ENCODE measurements at regions of chr9 and their contacts with region 1.

Region 1: DNA sequence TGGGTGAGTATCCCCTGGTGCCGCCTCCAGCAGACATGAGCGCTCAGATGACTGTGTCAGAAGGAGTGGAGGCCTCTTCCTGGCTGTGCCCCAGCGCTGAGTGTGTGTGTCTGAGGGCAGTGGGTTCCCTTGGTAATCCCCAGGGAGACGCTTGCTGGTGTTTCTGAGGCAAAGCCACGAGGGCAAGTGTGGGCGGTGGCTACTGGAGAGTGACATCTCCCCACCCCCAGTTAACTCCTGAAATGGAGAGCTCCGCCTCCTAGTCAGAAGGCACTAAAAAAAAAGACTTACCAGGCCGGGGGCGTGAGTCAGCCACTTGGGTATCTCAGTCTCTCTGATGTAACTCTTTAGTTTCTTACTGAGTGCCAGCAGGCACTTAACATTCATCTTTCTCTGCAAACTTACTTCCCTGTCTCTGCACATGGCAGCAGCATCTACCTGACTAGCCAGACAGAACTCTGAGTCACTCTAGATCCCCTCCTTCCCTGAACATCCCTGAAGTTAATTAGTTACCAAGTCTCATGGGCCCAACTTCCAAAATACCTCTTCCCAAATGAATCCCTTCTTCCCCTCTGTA is 19.3 kb downstream of the ORM2 start:
- DNase-seq: peak; percentile 87
- H3K4me3 Mint-ChIP-seq: peak overlapping the region; percentile 58
- H3K27ac Mint-ChIP-seq: peak overlapping the region; percentile 99
- H3K4me1 Mint-ChIP-seq: peaks cover 51% of the 10 kb centered on the region
- H3K27me3 Mint-ChIP-seq: no peaks in the 10 kb centered on the region

Region 2: GRCh38 chr9:113317777-113318176 is 1031.2 kb before region 1 on chr9:
- intact Hi-C with region 1: no loop called
- DNase-seq: no peak
- H3K4me3 Mint-ChIP-seq: no peak overlapping the region
- H3K27ac Mint-ChIP-seq: no peak overlapping the region
- H3K4me1 Mint-ChIP-seq: no peaks in the 10 kb centered on the region
- H3K27me3 Mint-ChIP-seq: no peaks in the 10 kb centered on the region

Region 3: GRCh38 chr9:114246558-114246957 is 102.4 kb before region 1 on chr9:
- intact Hi-C with region 1: no loop called
- DNase-seq: no peak
- H3K4me3 Mint-ChIP-seq: no peak overlapping the region
- H3K27ac Mint-ChIP-seq: no peak overlapping the region
- H3K4me1 Mint-ChIP-seq: no peaks in the 10 kb centered on the region
- H3K27me3 Mint-ChIP-seq: no peaks in the 10 kb centered on the region

Region 4: GRCh38 chr9:114366334-114367128 is 17.5 kb after region 1 on chr9:
- intact Hi-C with region 1: loop called (anchors 1 kb)
- DNase-seq: peak; percentile 80
- H3K4me3 Mint-ChIP-seq: peak overlapping the region; percentile 59
- H3K27ac Mint-ChIP-seq: peak overlapping the region; percentile 87
- H3K4me1 Mint-ChIP-seq: peaks cover 67% of the 10 kb centered on the region
- H3K27me3 Mint-ChIP-seq: no peaks in the 10 kb centered on the region

Region 5: DNA sequence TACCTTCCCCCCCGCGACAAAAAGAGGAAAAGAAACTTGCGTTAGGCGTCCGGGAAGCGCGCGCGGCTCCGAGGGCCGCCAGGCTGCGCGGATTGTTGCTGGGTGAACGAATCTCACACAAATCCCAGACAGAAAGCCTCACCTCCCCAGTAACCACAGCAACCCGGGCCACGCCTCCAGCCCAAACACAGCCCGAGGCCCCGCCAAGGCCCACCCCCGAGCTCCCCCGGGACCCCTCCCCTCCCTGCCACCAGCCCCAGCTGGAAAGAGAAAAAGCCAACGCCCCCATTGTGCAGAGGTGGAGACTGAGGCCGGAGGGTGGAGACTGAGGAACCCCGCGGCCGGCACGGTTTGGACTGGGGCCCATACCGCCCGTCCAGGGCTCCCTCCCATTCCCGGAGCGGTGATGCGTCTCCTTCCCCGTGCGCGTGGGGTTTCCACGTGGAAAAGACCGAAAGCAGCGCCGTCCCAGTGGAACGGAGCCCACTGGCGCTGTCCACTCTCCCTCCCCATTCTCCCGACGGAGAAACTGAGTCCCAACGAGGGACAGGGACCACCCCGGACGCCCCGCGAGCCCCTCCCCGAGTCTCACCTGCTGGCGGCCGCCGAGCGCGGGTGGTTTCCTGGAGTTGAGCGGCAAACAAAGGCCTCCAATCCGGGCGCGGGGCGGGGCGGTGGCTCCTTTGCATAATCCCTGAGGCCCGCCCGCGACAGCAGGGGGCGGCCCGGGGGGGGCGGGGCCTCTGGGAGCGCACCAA is 49.0 kb after region 1 on chr9:
- intact Hi-C with region 1: loop called (anchors 1 kb)
- DNase-seq: peak; percentile 99
- H3K4me3 Mint-ChIP-seq: peak overlapping the region; percentile 97
- H3K27ac Mint-ChIP-seq: peak overlapping the region; percentile 87
- H3K4me1 Mint-ChIP-seq: peaks cover 33% of the 10 kb centered on the region
- H3K27me3 Mint-ChIP-seq: no peaks in the 10 kb centered on the region

Region 6: DNA sequence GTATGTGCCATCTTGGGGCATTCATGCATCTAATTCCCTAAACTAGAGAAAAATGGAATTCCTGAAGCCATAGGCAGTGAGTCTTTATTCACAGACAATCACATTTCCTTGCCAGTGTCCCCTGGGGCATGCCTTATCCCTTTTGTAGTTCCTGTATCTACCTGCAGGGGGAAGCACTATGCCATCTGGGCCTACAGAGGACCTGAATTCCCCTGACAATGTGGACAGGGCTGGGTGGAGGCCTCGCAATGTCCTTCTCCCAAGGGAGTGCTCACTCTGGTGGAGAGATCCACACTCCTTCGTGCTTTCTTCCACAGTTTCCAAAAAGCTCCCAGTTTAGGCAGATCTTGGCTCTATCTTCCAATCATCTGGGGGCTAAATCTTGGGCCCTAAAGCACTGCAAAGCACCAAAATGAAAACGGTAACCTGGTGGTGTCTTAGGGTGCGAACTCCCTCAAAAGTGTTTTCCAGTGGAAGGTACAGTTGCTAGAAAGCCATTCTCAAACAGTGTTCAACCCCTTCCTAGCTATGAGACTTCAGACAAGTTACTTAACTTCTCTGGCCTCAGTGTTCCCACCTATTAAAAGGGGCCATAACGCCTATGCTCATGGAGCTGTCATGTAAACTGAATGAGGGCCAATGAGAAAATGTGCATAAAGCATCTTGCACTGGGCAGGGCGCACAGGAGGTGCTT is 138.8 kb after region 1 on chr9:
- intact Hi-C with region 1: loop called (anchors 1 kb)
- DNase-seq: peak; percentile 92
- H3K4me3 Mint-ChIP-seq: no peak overlapping the region
- H3K27ac Mint-ChIP-seq: peak overlapping the region; percentile 12
- H3K4me1 Mint-ChIP-seq: peaks cover 32% of the 10 kb centered on the region
- H3K27me3 Mint-ChIP-seq: peaks cover 8% of the 10 kb centered on the region

Region 7: GRCh38 chr9:114587385-114588202 is 238.6 kb after region 1 on chr9 and contains the start of gene ATP6V1G1:
- intact Hi-C with region 1: loop called (anchors 5 kb)
- DNase-seq: peak; percentile 100
- H3K4me3 Mint-ChIP-seq: peak within 1 kb of the TSS; percentile 98
- H3K27ac Mint-ChIP-seq: peak within 1 kb of the TSS; percentile 99
- H3K4me1 Mint-ChIP-seq: peaks cover 43% of the 10 kb centered on the region
- H3K27me3 Mint-ChIP-seq: peaks cover 4% of the 10 kb centered on the region
- total RNA-seq, gene ATP6V1G1: 46.7 and 47.1 TPM in 2 replicates

Region 8: GRCh38 chr9:116181853-116182610 is 1833.0 kb after region 1 on chr9:
- intact Hi-C with region 1: no loop called
- DNase-seq: no peak
- H3K4me3 Mint-ChIP-seq: no peak overlapping the region
- H3K27ac Mint-ChIP-seq: no peak overlapping the region
- H3K4me1 Mint-ChIP-seq: no peaks in the 10 kb centered on the region
- H3K27me3 Mint-ChIP-seq: no peaks in the 10 kb centered on the region

Measured in activated CD4-positive, alpha-beta T cell treated with anti-CD3 and anti-CD28 coated beads, Interleukin-2, amount 10 ng/mL, durations not matched to agents 24 days and 14 days (primary cell).